ENCODE measurements at regions of chr17 and their contacts with region 1.

Region 1: GRCh38 chr17:82781894-82782274 is 30.0 kb downstream of the TBCD start:
- DNase-seq: peak; percentile 75 to 96 (median 86)
- ATAC-seq: peak; percentile 100
- H3K4me3 ChIP-seq: no peak overlapping the region
- H3K27ac ChIP-seq: peak overlapping the region in 1 of 2 donors; percentile 65
- H3K4me1 ChIP-seq: peaks cover 0 to 10% of the 10 kb centered on the region in 2 donors
- H3K27me3 ChIP-seq: no peaks in the 10 kb centered on the region
- CTCF ChIP-seq: peak; percentile 96 to 98

Region 2: DNA sequence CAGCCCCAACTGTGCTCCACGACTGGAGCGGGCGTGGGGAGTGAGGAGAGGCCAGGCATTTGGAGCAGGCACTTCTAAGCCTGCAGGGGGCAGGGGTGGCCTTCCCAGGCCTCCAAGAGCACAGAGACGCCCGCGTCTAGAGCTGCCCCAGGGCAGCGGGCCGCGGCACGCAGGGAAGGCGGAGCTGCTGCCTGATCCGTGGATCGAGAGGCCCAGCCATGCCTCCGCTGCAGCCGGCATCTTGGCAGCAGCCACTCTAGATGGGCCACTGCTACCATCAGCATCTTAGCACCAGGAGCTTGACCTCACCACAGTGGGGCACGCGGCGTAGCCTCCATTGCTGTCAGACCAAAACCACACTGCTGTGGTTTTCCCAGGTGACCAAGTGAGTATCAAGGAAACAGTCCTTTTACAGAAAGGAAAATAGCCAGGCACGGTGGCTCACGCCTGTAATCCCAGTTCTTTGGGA is 113.2 kb before region 1 on chr17:
- intact Hi-C with region 1: no loop called
- DNase-seq: peak in 3 of 4 donors; percentile 55 to 88 (median 65)
- ATAC-seq: peak; percentile 93
- H3K4me3 ChIP-seq: no peak overlapping the region
- H3K27ac ChIP-seq: no peak overlapping the region
- H3K4me1 ChIP-seq: peaks cover 0 to 11% of the 10 kb centered on the region in 2 donors
- H3K27me3 ChIP-seq: no peaks in the 10 kb centered on the region
- CTCF ChIP-seq: peak; percentile 39 to 72

Region 3: DNA sequence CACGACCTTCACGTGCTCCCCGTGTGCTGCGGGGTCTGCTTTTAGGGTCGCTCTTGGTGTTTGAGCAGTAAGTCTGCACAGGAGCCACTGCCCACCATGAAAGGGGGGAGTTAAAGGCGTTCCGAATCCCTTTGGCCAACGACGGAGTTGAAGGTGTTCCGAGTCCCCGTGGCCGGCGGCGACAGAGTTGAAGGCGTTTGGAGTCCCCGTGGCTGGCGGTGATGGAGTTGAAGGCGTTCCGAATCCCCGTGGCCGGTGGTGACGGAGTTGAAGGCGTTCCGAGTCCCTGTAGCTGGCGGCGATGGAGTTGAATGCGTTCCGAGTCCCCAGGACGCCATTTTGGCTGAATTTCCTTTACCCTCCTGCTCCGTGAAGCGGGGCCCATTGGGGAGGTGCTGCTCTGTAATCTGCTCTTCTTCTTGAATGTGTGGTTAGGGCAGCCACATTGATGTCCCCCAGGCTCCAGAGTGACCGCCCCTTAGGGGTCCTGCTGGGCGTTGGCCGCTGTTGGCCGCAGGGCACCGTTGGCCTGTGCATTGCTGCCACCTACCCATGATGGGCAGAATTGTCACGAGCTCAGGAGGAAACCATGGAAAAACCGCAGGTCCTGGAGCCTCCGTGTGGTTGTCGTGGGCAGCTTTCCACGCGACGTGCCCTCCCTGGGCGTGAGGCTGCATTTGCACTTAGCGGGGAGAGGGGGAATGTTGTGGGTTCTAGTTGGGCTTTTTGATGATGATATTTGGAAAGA is 131.6 kb after region 1 on chr17:
- intact Hi-C with region 1: loop called in 1 of 2 experiments (anchors 5 kb)
- DNase-seq: peak in 1 of 4 donors; percentile 60
- ATAC-seq: peak; percentile 34
- H3K4me3 ChIP-seq: no peak overlapping the region
- H3K27ac ChIP-seq: no peak overlapping the region
- H3K4me1 ChIP-seq: peaks cover 0 to 13% of the 10 kb centered on the region in 2 donors
- H3K27me3 ChIP-seq: no peaks in the 10 kb centered on the region
- CTCF ChIP-seq: peak in 1 of 2 donors; percentile 5

Region 4: GRCh38 chr17:82962864-82963684 is 181.2 kb after region 1 on chr17:
- intact Hi-C with region 1: loop called in 1 of 2 experiments (anchors 5 kb)
- DNase-seq: peak; percentile 72 to 93 (median 87)
- ATAC-seq: peak; percentile 97
- H3K4me3 ChIP-seq: peak overlapping the region in 1 of 2 donors; percentile 9
- H3K27ac ChIP-seq: peak overlapping the region in 1 of 2 donors; percentile 50
- H3K4me1 ChIP-seq: peaks cover 4 to 11% of the 10 kb centered on the region in 2 donors
- H3K27me3 ChIP-seq: no peaks in the 10 kb centered on the region
- CTCF ChIP-seq: peak; percentile 64 to 76

Region 5: GRCh38 chr17:83002118-83002805 is 220.4 kb after region 1 on chr17:
- intact Hi-C with region 1: no loop called
- DNase-seq: peak in 1 of 4 donors; percentile 76
- ATAC-seq: no peak
- H3K4me3 ChIP-seq: no peak overlapping the region
- H3K27ac ChIP-seq: no peak overlapping the region
- H3K4me1 ChIP-seq: no peaks in the 10 kb centered on the region
- H3K27me3 ChIP-seq: no peaks in the 10 kb centered on the region
- CTCF ChIP-seq: no peak